MCF 10A (cell line): ENCODE measurements at regions of chr14 and their contacts with region 1.

Region 1: GRCh38 chr14:81436296-81437138 is 36.4 kb upstream of the STON2 start:
- DNase-seq: peak; percentile 81
- H3K4me3 Mint-ChIP-seq: peak overlapping the region; percentile 70
- H3K27ac Mint-ChIP-seq: no peak overlapping the region
- H3K4me1 Mint-ChIP-seq: peaks cover 10% of the 10 kb centered on the region
- H3K27me3 Mint-ChIP-seq: no peaks in the 10 kb centered on the region
- CTCF ChIP-seq: no peak

Region 2: GRCh38 chr14:81324018-81324417 is 112.5 kb before region 1 on chr14:
- CTCF ChIA-PET with region 1: interaction called, 4 read pairs
- POLR2A ChIA-PET with region 1: interaction called, 18 read pairs
- intact Hi-C with region 1: loop called (anchors 5 kb)
- DNase-seq: peak; percentile 89
- H3K4me3 Mint-ChIP-seq: peak overlapping the region; percentile 70
- H3K27ac Mint-ChIP-seq: peak overlapping the region; percentile 14
- H3K4me1 Mint-ChIP-seq: peaks cover 28% of the 10 kb centered on the region
- H3K27me3 Mint-ChIP-seq: no peaks in the 10 kb centered on the region
- CTCF ChIP-seq: no peak

Region 3: DNA sequence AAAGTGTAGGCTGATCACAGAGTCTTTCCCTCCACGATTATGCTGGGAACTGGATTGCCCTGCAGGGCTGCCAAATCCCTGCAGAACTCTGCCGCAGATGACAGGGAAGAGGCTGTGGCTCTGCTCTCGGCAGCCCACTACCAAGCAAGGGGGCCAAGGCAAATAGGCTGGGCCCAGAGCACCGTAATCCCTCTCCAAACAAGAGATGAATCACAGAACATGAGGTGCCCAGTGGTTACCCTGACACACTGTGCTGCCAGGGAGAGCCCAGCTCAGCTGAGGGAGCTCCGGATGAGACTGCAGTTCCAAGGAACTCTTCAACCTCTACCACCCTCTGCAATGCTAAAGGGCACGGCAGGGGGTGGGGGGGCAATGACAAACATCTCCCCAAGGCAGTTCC is 70.3 kb before region 1 on chr14:
- CTCF ChIA-PET with region 1: interaction called, 4 read pairs
- POLR2A ChIA-PET with region 1: interaction called, 21 read pairs
- intact Hi-C with region 1: loop called (anchors 10 kb)
- DNase-seq: peak; percentile 10
- H3K4me3 Mint-ChIP-seq: no peak overlapping the region
- H3K27ac Mint-ChIP-seq: peak overlapping the region; percentile 70
- H3K4me1 Mint-ChIP-seq: peaks cover 19% of the 10 kb centered on the region
- H3K27me3 Mint-ChIP-seq: no peaks in the 10 kb centered on the region
- CTCF ChIP-seq: no peak

Region 4: DNA sequence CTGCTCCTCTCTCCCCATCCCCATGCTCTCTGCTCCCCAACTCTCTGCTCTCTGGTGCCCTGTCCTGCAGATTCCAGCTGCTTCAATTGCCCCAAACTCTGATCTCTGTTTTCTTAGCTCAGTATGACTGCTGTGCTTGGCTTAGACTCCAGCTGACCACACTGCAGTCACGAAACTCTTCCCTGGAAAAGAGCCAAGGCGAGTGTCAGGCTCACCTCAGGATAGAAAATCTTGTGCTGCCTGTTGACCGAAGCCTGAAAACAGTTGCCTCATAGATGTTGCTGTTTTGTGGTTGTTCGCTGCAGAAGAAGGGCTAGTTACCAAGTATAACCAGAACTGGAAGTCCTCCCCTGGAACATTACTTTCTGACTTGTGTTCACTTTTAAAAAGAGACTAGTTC is 29.7 kb before region 1 on chr14:
- CTCF ChIA-PET with region 1: interaction called, 5 read pairs
- POLR2A ChIA-PET with region 1: interaction called, 78 read pairs
- intact Hi-C with region 1: no loop called
- DNase-seq: peak; percentile 93
- H3K4me3 Mint-ChIP-seq: peak overlapping the region; percentile 2
- H3K27ac Mint-ChIP-seq: peak overlapping the region; percentile 57
- H3K4me1 Mint-ChIP-seq: peaks cover 19% of the 10 kb centered on the region
- H3K27me3 Mint-ChIP-seq: no peaks in the 10 kb centered on the region
- CTCF ChIP-seq: no peak